ENCODE measurements at regions of chr1 and their contacts with region 1.

Region 1: DNA sequence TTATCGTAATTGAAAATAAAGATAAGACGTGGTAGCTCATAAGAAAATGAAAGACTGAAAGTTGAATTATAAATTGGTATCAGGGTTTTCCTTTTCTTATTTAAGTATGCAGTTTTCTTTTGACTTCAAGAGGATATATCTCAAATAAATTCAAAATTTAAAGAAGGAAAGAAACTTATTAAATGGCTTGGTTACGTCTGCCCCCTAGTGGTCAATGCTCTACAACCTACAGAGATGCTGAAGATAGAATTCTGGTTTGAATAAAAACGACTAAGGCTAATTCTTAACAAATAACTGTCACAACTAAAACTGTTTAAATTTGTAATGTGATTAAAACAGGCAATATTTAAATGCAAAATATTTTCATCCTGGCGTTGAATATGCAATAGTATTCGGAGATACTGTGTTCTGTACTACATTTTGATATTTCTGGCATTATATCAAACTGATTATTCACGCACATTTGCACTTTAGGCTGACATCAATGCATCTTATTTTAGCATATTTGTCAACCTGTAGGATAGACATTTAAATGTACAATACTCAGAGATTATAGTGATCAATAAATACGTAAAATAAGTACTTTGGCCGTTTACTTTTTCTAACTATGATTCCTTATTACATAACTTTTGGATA is 26.8 kb downstream of the IFI44 start:
- DNase-seq: peak in 12 of 14 experiments; percentile 12 to 85 (median 50)
- ATAC-seq: peak; percentile 41
- H3K4me3 ChIP-seq: no peak overlapping the region
- H3K4me3 Mint-ChIP-seq: no peak overlapping the region
- H3K27ac ChIP-seq: no peak overlapping the region
- H3K27ac Mint-ChIP-seq: no peak overlapping the region
- H3K4me1 ChIP-seq: no peaks in the 10 kb centered on the region
- H3K4me1 Mint-ChIP-seq: peaks cover 3% of the 10 kb centered on the region
- H3K27me3 ChIP-seq: no peaks in the 10 kb centered on the region
- H3K27me3 Mint-ChIP-seq: no peaks in the 10 kb centered on the region
- CTCF ChIP-seq: peak; percentile 88

Region 2: GRCh38 chr1:78126506-78126905 is 550.0 kb before region 1 on chr1:
- CTCF ChIA-PET with region 1: interaction called, 3 read pairs
- POLR2A ChIA-PET with region 1: no interaction called
- intact Hi-C with region 1: loop called (anchors 1 to 5 kb)
- DNase-seq: no peak
- ATAC-seq: no peak
- H3K4me3 ChIP-seq: no peak overlapping the region
- H3K4me3 Mint-ChIP-seq: no peak overlapping the region
- H3K27ac ChIP-seq: no peak overlapping the region
- H3K27ac Mint-ChIP-seq: no peak overlapping the region
- H3K4me1 ChIP-seq: no peaks in the 10 kb centered on the region
- H3K4me1 Mint-ChIP-seq: no peaks in the 10 kb centered on the region
- H3K27me3 ChIP-seq: peaks cover 0 to 2% of the 10 kb centered on the region in 2 experiments
- H3K27me3 Mint-ChIP-seq: no peaks in the 10 kb centered on the region
- CTCF ChIP-seq: no peak

Region 3: DNA sequence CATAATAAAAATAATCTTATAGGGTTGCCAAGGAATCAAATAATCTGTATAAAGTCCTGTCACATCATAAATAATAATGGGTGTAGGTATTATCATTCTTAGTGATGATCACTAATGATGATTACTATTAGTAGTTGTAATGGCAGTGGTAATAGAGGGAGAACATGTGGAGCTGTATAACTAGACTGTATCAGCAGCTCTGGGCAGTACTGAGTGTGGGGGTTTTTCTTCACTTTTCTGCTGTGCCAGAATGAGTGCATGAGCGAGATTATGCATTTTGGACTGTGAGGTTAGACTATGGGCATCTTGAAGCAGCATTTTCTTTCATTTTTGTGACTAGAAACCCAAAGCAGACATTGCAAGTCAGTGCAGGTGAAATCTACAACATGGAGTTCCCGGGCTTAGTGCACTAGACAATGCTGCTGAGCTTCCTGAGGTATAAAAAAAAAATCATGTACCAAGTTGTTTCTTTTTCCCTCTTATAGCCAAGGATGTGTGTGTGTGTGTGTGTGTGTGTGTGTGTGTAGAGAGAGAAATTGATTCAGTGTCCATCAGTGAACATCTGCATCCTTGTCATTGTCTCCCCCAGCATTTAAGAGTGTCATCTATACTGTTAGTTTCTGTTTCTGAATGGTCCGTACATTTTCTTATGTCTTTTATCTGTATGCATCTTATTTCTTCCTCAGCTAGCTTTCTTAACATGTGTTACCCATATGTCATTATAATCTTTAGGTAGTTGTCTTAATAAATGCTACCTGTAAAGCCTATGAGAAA is 544.1 kb before region 1 on chr1:
- CTCF ChIA-PET with region 1: interaction called, 3 read pairs
- POLR2A ChIA-PET with region 1: no interaction called
- intact Hi-C with region 1: loop called (anchors 1 to 5 kb)
- DNase-seq: no peak
- ATAC-seq: no peak
- H3K4me3 ChIP-seq: no peak overlapping the region
- H3K4me3 Mint-ChIP-seq: no peak overlapping the region
- H3K27ac ChIP-seq: no peak overlapping the region
- H3K27ac Mint-ChIP-seq: no peak overlapping the region
- H3K4me1 ChIP-seq: no peaks in the 10 kb centered on the region
- H3K4me1 Mint-ChIP-seq: no peaks in the 10 kb centered on the region
- H3K27me3 ChIP-seq: no peaks in the 10 kb centered on the region
- H3K27me3 Mint-ChIP-seq: no peaks in the 10 kb centered on the region
- CTCF ChIP-seq: no peak

Region 4: GRCh38 chr1:78145105-78145580 is 531.3 kb before region 1 on chr1:
- CTCF ChIA-PET with region 1: no interaction called
- POLR2A ChIA-PET with region 1: no interaction called
- intact Hi-C with region 1: loop called in 1 of 2 experiments (anchors 5 kb)
- DNase-seq: peak in 5 of 14 experiments; percentile 7 to 63 (median 40)
- ATAC-seq: peak; percentile 37
- H3K4me3 ChIP-seq: no peak overlapping the region
- H3K4me3 Mint-ChIP-seq: no peak overlapping the region
- H3K27ac ChIP-seq: no peak overlapping the region
- H3K27ac Mint-ChIP-seq: no peak overlapping the region
- H3K4me1 ChIP-seq: peaks cover 7% of the 10 kb centered on the region
- H3K4me1 Mint-ChIP-seq: peaks cover 20% of the 10 kb centered on the region
- H3K27me3 ChIP-seq: peaks cover 0 to 12% of the 10 kb centered on the region in 2 experiments
- H3K27me3 Mint-ChIP-seq: peaks cover 18% of the 10 kb centered on the region
- CTCF ChIP-seq: peak; percentile 78

Region 5: DNA sequence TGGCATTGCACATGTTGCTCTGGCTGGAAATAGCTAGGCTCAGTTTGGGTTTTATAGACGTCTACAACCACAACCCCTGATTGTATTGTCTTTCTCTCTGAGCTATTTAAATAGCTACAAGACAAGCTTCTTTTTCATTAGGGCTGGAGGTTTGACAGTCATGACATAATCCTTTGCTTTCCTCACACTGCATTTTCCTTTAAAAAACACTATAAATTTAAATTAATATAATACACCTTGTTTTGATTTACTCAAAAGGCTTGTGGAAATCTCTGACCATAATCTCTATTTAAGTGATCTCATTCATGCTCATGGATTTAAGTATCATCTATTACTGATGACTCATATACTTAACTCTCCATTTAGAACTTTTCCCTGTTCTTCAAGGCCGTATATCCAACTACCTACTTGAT is 236.1 kb before region 1 on chr1:
- CTCF ChIA-PET with region 1: no interaction called
- POLR2A ChIA-PET with region 1: no interaction called
- intact Hi-C with region 1: no loop called
- DNase-seq: no peak
- ATAC-seq: no peak
- H3K4me3 ChIP-seq: no peak overlapping the region
- H3K4me3 Mint-ChIP-seq: no peak overlapping the region
- H3K27ac ChIP-seq: no peak overlapping the region
- H3K27ac Mint-ChIP-seq: no peak overlapping the region
- H3K4me1 ChIP-seq: no peaks in the 10 kb centered on the region
- H3K4me1 Mint-ChIP-seq: no peaks in the 10 kb centered on the region
- H3K27me3 ChIP-seq: no peaks in the 10 kb centered on the region
- H3K27me3 Mint-ChIP-seq: no peaks in the 10 kb centered on the region
- CTCF ChIP-seq: no peak

Region 6: GRCh38 chr1:78617615-78618026 is 58.8 kb before region 1 on chr1:
- CTCF ChIA-PET with region 1: interaction called, 19 read pairs
- POLR2A ChIA-PET with region 1: interaction called, 4 read pairs
- intact Hi-C with region 1: loop called (anchors 1 kb)
- DNase-seq: peak; percentile 13 to 88 (median 46)
- ATAC-seq: peak; percentile 65
- H3K4me3 ChIP-seq: no peak overlapping the region
- H3K4me3 Mint-ChIP-seq: peak overlapping the region; percentile 79
- H3K27ac ChIP-seq: no peak overlapping the region
- H3K27ac Mint-ChIP-seq: peak overlapping the region; percentile 83
- H3K4me1 ChIP-seq: peaks cover 15% of the 10 kb centered on the region
- H3K4me1 Mint-ChIP-seq: peaks cover 46% of the 10 kb centered on the region
- H3K27me3 ChIP-seq: no peaks in the 10 kb centered on the region
- H3K27me3 Mint-ChIP-seq: no peaks in the 10 kb centered on the region
- CTCF ChIP-seq: peak; percentile 86

Region 7: GRCh38 chr1:79040424-79041082 is 364.1 kb after region 1 on chr1:
- CTCF ChIA-PET with region 1: no interaction called
- POLR2A ChIA-PET with region 1: no interaction called
- intact Hi-C with region 1: no loop called
- DNase-seq: no peak
- ATAC-seq: no peak
- H3K4me3 ChIP-seq: no peak overlapping the region
- H3K4me3 Mint-ChIP-seq: peak overlapping the region; percentile 3
- H3K27ac ChIP-seq: no peak overlapping the region
- H3K27ac Mint-ChIP-seq: no peak overlapping the region
- H3K4me1 ChIP-seq: no peaks in the 10 kb centered on the region
- H3K4me1 Mint-ChIP-seq: no peaks in the 10 kb centered on the region
- H3K27me3 ChIP-seq: no peaks in the 10 kb centered on the region
- H3K27me3 Mint-ChIP-seq: no peaks in the 10 kb centered on the region
- CTCF ChIP-seq: no peak